Posterior vena cava (tissue), 2 donors: ENCODE measurements at regions of chr1 and their contacts with region 1.

Region 1: DNA sequence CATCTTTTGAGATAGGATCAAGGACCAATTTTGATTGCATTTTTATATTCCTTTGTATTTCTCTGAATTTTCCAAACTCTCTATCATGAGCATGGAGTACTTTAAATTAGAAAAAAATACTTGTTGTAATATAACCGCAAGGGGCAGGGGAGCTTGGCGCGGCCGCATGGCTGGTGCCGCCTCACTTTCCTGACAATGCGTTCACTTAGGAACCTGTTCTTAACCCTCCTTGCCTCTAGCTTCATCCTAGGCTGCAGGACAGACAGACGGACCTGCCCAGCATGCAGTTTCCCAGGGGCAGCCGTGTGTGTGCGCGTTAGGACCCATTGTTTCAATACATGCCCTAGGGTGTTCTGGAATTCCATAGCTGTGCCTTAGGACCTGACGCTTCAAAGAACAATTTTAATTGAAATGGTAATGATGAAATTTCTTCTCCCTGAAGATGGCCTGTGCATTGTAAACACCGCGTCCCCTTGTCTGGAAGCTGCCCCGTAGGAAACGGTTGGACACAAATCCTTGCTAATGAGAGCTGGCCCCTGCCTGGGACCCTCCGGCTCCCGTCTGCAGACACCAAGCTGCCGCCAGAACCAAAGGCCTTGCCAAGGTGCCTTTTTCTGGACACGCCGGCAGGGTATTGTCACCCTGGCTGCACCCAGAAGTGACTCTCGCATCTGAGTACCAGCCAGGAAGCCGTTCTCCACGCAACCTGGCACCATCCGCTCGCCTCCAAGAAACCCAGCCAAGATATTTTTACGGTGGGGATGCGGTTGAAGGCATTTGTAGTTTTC is 466.4 kb downstream of the NPHP4 start:
- DNase-seq: no peak

Region 2: GRCh38 chr1:5444396-5444795 is 81.4 kb before region 1 on chr1:
- intact Hi-C with region 1: loop called in 1 of 2 experiments (anchors 5 kb)
- DNase-seq: no peak

Region 3: GRCh38 chr1:5481889-5482288 is 43.9 kb before region 1 on chr1:
- intact Hi-C with region 1: no loop called
- DNase-seq: no peak

Region 4: GRCh38 chr1:5551274-5551975 is 25.6 kb after region 1 on chr1:
- intact Hi-C with region 1: no loop called
- DNase-seq: no peak

Region 5: GRCh38 chr1:6385488-6386191 is 859.8 kb after region 1 on chr1:
- intact Hi-C with region 1: no loop called
- DNase-seq: no peak

Region 6: DNA sequence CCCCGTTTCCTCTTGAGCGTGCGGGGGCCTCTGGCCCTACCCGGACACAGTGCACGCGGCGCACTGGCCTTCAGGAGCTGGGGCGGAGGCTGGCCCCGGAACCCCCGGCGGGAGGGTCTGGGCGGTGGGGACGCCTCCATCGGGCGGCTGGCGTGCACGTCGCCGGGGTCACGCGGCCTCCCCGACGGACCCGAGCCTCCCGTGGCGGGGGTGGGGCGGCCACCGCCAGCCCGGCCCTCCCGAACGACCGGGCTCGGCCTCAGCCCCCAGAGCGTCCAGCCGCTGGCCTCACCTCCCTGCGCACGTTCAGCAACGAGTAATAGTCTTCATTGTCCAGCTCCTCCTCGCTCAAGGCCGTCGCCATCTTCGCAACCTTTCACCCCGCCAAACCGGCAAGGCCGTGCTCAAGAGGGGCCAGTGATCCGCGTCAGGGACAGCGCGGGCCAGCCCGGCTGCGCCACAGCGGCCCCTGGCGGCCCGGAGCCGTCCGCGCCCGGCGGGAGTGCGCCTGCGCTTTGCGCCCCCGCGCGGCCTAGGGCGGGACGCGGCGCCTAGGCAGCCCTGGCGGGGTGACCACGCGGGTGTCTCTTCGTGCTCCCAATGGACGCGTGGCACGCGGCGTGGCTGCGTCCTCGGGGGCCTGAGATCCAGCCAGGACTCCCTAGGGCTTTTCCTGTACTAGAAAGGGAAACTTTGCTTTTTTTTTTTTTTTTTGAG is 1175.8 kb after region 1 on chr1 and contains the start of gene DNAJC11:
- intact Hi-C with region 1: no loop called
- DNase-seq: peak; percentile 97
- total RNA-seq, gene DNAJC11: 24.6 TPM